ENCODE measurements at regions of chr4 and their contacts with region 1.

Region 1: GRCh38 chr4:98928505-98929340 is at the start of gene EIF4E:
- DNase-seq: peak; percentile 92 to 99
- ATAC-seq: peak; percentile 74 to 92 (median 86)
- H3K4me3 ChIP-seq: peak within 1 kb of the TSS; percentile 99
- H3K4me3 Mint-ChIP-seq: peak within 1 kb of the TSS; percentile 99
- H3K27ac ChIP-seq: peak within 1 kb of the TSS; percentile 95
- H3K27ac Mint-ChIP-seq: peak within 1 kb of the TSS; percentile 93 to 98
- H3K4me1 ChIP-seq: peaks cover 12% of the 10 kb centered on the region
- H3K4me1 Mint-ChIP-seq: peaks cover 20 to 27% of the 10 kb centered on the region in 2 donors
- H3K27me3 ChIP-seq: no peaks in the 10 kb centered on the region
- H3K27me3 Mint-ChIP-seq: no peaks in the 10 kb centered on the region
- CTCF ChIP-seq: no peak
- total RNA-seq, gene EIF4E: 67.4 to 92.4 (median 75.5) TPM

Region 2: DNA sequence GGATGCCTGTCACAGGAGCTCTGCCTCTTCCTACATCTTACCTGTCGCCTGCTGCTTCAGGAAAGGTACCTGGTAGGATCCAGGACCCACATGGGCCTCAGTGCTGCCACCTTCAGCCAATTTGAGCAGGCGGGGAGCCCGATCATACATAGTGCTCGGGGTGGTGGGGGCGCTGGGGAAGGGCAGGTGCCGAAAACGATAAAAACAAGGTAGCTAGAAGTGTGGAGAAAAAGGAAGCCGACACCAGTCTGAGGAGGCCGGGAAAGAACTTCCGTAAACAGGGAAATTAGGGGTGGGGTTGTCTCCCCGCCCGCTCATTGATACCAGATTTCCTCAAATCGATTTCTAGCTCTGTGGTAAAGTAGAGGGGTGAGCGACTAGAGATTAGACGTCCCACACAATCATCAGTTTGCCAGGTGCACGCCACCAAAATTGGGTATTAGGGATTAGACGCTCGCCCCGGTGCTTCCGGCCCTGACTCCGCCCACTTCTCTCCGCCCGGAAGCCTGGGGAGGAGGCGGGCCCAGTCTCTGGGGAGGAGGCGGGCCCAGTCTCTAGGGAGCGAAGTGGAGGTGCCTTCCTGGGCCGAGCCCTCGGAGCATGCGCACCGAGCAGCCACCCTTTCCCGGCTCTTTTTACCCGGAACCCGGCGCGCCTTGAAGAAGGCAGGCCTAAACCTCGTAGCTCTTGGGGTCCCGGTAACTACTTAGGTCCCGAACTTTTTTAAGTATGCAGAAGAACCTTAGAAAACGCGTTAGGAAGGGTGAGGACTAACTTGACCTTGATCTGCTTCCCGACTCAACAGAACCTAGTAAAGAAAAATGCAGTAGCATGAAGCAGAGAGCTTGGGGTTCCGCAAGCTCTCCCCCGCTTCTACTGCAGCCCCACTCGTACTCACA is 785.5 kb before region 1 on chr4 and contains the start of gene STPG2:
- intact Hi-C with region 1: loop called (anchors 10 kb)
- DNase-seq: peak; percentile 87 to 97
- ATAC-seq: peak; percentile 100
- H3K4me3 ChIP-seq: peak within 1 kb of the TSS; percentile 87
- H3K4me3 Mint-ChIP-seq: peak within 1 kb of the TSS; percentile 98
- H3K27ac ChIP-seq: peak within 1 kb of the TSS; percentile 95
- H3K27ac Mint-ChIP-seq: peak within 1 kb of the TSS; percentile 94 to 95
- H3K4me1 ChIP-seq: peaks cover 13% of the 10 kb centered on the region
- H3K4me1 Mint-ChIP-seq: peaks cover 15 to 19% of the 10 kb centered on the region in 2 donors
- H3K27me3 ChIP-seq: no peaks in the 10 kb centered on the region
- H3K27me3 Mint-ChIP-seq: peaks cover 12 to 22% of the 10 kb centered on the region in 2 donors
- CTCF ChIP-seq: peak; percentile 54
- total RNA-seq, gene STPG2: 0.23 TPM in 1 of 3 donors, not detected in the others

Region 3: DNA sequence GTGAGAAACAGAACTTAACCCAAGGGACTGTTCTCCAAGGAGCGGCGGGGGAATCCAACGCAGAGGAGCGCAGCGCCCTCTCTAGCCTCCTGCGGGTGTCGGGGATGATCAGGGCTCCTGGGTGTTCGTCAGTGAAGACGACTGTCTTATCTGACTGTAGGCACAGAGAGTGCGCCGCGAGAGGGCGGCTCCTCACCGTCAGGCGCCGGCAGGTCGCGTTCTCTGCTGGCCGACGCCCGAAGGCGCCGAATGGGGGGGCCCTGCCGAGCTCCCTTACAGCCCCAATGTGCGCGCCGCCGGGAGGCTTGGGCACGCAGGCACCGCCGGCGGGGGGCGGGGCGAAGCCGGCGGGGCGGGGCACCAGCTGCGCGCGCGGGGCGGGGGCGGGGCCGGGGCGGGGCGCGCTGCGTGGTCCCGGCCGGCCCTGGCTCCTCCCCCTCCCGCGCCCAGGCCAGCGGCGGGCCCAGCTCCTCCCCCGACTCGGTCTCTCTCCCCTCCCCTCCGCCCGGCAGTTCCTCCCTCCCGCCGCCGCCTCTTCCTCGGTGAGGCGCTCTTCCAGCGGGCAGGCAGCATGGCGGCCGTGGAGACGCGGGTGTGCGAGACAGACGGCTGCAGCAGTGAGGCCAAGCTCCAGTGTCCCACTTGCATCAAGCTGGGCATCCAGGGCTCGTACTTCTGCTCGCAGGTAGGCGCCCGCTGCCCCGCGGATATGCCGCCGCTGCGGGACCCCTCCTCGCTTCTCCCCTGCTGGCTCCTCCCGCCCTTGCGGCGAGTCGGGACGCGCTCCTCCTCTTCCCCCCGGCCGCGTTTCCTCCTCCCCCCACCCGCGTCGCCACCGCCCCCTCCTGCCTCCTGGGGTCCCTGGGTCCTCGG is 66.7 kb after region 1 on chr4 and contains the start of gene METAP1:
- intact Hi-C with region 1: loop called (anchors 1 kb)
- DNase-seq: peak; percentile 94 to 98
- ATAC-seq: peak; percentile 85 to 94 (median 86)
- H3K4me3 ChIP-seq: peak within 1 kb of the TSS; percentile 57
- H3K4me3 Mint-ChIP-seq: peak within 1 kb of the TSS; percentile 90
- H3K27ac ChIP-seq: peak within 1 kb of the TSS; percentile 92
- H3K27ac Mint-ChIP-seq: peak within 1 kb of the TSS; percentile 94 to 95
- H3K4me1 ChIP-seq: peaks cover 12% of the 10 kb centered on the region
- H3K4me1 Mint-ChIP-seq: peaks cover 30 to 33% of the 10 kb centered on the region in 2 donors
- H3K27me3 ChIP-seq: no peaks in the 10 kb centered on the region
- H3K27me3 Mint-ChIP-seq: no peaks in the 10 kb centered on the region
- CTCF ChIP-seq: peak; percentile 63
- total RNA-seq, gene METAP1: 41.1 to 54.3 (median 41.5) TPM

Region 4: GRCh38 chr4:99088481-99089365 is 160.0 kb after region 1 on chr4 and contains the start of gene ADH5:
- intact Hi-C with region 1: loop called (anchors 1 kb)
- DNase-seq: peak; percentile 78 to 94
- ATAC-seq: peak; percentile 92 to 98 (median 93)
- H3K4me3 ChIP-seq: peak within 1 kb of the TSS; percentile 74
- H3K4me3 Mint-ChIP-seq: peak within 1 kb of the TSS; percentile 98
- H3K27ac ChIP-seq: peak within 1 kb of the TSS; percentile 89
- H3K27ac Mint-ChIP-seq: peak within 1 kb of the TSS; percentile 96 to 99
- H3K4me1 ChIP-seq: peaks cover 19% of the 10 kb centered on the region
- H3K4me1 Mint-ChIP-seq: peaks cover 59 to 66% of the 10 kb centered on the region in 2 donors
- H3K27me3 ChIP-seq: no peaks in the 10 kb centered on the region
- H3K27me3 Mint-ChIP-seq: no peaks in the 10 kb centered on the region
- CTCF ChIP-seq: no peak
- total RNA-seq, gene ADH5: 54.3 to 80.4 (median 62.5) TPM

Region 5: GRCh38 chr4:99894161-99894997 is 965.7 kb after region 1 on chr4 and contains the start of gene LAMTOR3:
- intact Hi-C with region 1: loop called (anchors 10 kb)
- DNase-seq: peak; percentile 80 to 96
- ATAC-seq: peak; percentile 96 to 99 (median 98)
- H3K4me3 ChIP-seq: peak within 1 kb of the TSS; percentile 69
- H3K4me3 Mint-ChIP-seq: peak within 1 kb of the TSS; percentile 86
- H3K27ac ChIP-seq: peak within 1 kb of the TSS; percentile 82
- H3K27ac Mint-ChIP-seq: peak within 1 kb of the TSS; percentile 81 to 95
- H3K4me1 ChIP-seq: peaks cover 20% of the 10 kb centered on the region
- H3K4me1 Mint-ChIP-seq: peaks cover 32 to 34% of the 10 kb centered on the region in 2 donors
- H3K27me3 ChIP-seq: no peaks in the 10 kb centered on the region
- H3K27me3 Mint-ChIP-seq: no peaks in the 10 kb centered on the region
- CTCF ChIP-seq: no peak
- total RNA-seq, gene LAMTOR3: 18.1 to 29.9 (median 25.9) TPM